Mammary epithelial cell (primary cell): ENCODE measurements at regions of chr10 and their contacts with region 1.

Region 1: GRCh38 chr10:19592276-19592675 is 224.0 kb upstream of the PLXDC2 start:
- DNase-seq: peak; percentile 93
- H3K4me3 ChIP-seq: no peak overlapping the region
- H3K27ac ChIP-seq: no peak overlapping the region
- H3K4me1 ChIP-seq: peaks cover 8% of the 10 kb centered on the region
- H3K27me3 ChIP-seq: no peaks in the 10 kb centered on the region
- CTCF ChIP-seq: no peak

Region 2: GRCh38 chr10:19541299-19541698 is 51.0 kb before region 1 on chr10:
- CTCF ChIA-PET with region 1: no interaction called
- dilution Hi-C with region 1: no loop called
- in situ Hi-C with region 1: no loop called
- intact Hi-C with region 1: loop called (anchors 5 kb)
- DNase-seq: no peak
- H3K4me3 ChIP-seq: no peak overlapping the region
- H3K27ac ChIP-seq: no peak overlapping the region
- H3K4me1 ChIP-seq: no peaks in the 10 kb centered on the region
- H3K27me3 ChIP-seq: no peaks in the 10 kb centered on the region
- CTCF ChIP-seq: no peak

Region 3: GRCh38 chr10:19719284-19719683 is 127.0 kb after region 1 on chr10:
- CTCF ChIA-PET with region 1: no interaction called
- dilution Hi-C with region 1: no loop called
- in situ Hi-C with region 1: no loop called
- intact Hi-C with region 1: no loop called
- DNase-seq: no peak
- H3K4me3 ChIP-seq: no peak overlapping the region
- H3K27ac ChIP-seq: no peak overlapping the region
- H3K4me1 ChIP-seq: no peaks in the 10 kb centered on the region
- H3K27me3 ChIP-seq: no peaks in the 10 kb centered on the region
- CTCF ChIP-seq: no peak